Heart right ventricle (tissue), 16 donors: ENCODE measurements at regions of chr9 and their contacts with region 1.

Region 1: DNA sequence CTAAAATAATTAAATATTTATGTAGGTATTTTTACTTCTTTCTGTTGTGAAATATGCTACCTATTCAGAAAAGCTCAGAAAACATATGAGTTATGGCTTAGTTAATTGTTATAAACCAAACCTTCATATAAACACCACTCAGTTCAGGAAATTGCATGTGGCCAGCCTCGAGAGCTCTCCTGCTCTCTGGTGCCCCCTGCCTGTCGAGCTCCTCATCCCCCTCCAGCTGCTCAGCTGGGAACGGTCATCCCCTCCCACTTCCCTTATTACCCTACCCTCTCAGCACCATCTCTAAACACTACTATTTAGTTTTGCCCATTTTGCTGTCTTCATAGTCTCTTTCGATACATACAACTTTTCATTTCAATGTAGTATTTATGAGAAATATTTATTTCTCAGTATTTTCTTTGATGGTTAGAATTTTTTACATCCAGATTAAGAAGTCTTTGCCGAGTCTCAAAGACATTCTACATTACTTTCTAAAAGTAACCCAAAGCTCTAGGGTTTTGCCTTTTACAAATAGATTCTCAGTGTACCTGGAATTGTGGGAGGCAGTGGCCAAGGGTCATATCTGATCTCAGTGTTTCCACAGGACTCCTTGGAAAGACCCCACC is 51.2 kb upstream of the SEMA4D start:
- DNase-seq: peak; percentile 74 to 81
- ATAC-seq: peak; percentile 83 to 97 (median 94)
- H3K4me3 ChIP-seq: no peak overlapping the region
- H3K27ac ChIP-seq: no peak overlapping the region
- H3K4me1 ChIP-seq: peaks cover 0 to 29% (median 0%) of the 10 kb centered on the region in 9 donors
- H3K27me3 ChIP-seq: peaks cover 0 to 3% (median 0%) of the 10 kb centered on the region in 7 donors
- CTCF ChIP-seq: peak; percentile 72 to 98 (median 93)

Region 2: GRCh38 chr9:89318123-89319014 is 230.8 kb before region 1 on chr9 and contains the start of gene SECISBP2:
- intact Hi-C with region 1: loop called in 8 of 10 experiments (anchors 1 to 5 kb)
- DNase-seq: peak; percentile 96 to 97
- ATAC-seq: peak; percentile 98 to 99 (median 99)
- H3K4me3 ChIP-seq: peak within 1 kb of the TSS; percentile 56 to 81 (median 67)
- H3K27ac ChIP-seq: peak within 1 kb of the TSS; percentile 98 to 100 (median 99)
- H3K4me1 ChIP-seq: peaks cover 5 to 62% (median 39%) of the 10 kb centered on the region in 9 donors
- H3K27me3 ChIP-seq: no peaks in the 10 kb centered on the region
- CTCF ChIP-seq: peak in 7 of 9 donors; percentile 78 to 93 (median 82)
- total RNA-seq, gene SECISBP2: 13.9 to 18.8 (median 17.0) TPM

Region 3: GRCh38 chr9:89323390-89323789 is 225.7 kb before region 1 on chr9:
- intact Hi-C with region 1: loop called in 9 of 10 experiments (anchors 1 to 5 kb)
- DNase-seq: no peak
- ATAC-seq: no peak
- H3K4me3 ChIP-seq: no peak overlapping the region
- H3K27ac ChIP-seq: no peak overlapping the region
- H3K4me1 ChIP-seq: peaks cover 5 to 53% (median 36%) of the 10 kb centered on the region in 9 donors
- H3K27me3 ChIP-seq: no peaks in the 10 kb centered on the region
- CTCF ChIP-seq: no peak

Region 4: DNA sequence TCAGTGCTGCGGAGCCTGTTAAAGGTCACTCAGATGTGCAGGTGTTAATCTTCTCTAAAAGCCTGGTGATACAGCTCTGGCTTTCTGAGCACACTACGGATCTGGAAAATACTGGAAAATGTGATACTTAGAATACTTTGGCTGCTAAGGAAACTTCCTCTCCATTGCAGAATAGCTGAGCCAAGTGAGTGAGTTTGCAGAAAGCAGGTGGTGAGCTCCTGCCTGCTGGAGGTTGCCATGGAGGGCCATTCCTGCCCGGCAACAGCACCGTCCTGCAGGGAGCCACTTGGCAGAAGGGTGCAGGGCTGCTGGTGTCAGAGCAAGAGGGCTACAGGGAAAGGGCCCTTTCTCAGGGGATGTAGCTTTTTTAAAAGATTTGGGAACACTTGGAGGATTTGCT is 190.2 kb before region 1 on chr9:
- intact Hi-C with region 1: loop called in 1 of 10 experiments (anchors 10 kb)
- DNase-seq: peak in 1 of 2 donors; percentile 40
- ATAC-seq: peak in 6 of 8 donors; percentile 39 to 86 (median 70)
- H3K4me3 ChIP-seq: no peak overlapping the region
- H3K27ac ChIP-seq: peak overlapping the region in 4 of 10 donors; percentile 22 to 79 (median 58)
- H3K4me1 ChIP-seq: peaks cover 5 to 35% (median 24%) of the 10 kb centered on the region in 9 donors
- H3K27me3 ChIP-seq: no peaks in the 10 kb centered on the region
- CTCF ChIP-seq: no peak

Region 5: GRCh38 chr9:89388084-89388867 is 160.9 kb before region 1 on chr9:
- intact Hi-C with region 1: loop called in 3 of 10 experiments (anchors 5 to 10 kb)
- DNase-seq: peak; percentile 34 to 37
- ATAC-seq: peak; percentile 58 to 78 (median 70)
- H3K4me3 ChIP-seq: no peak overlapping the region
- H3K27ac ChIP-seq: peak overlapping the region in 4 of 10 donors; percentile 9 to 83 (median 56)
- H3K4me1 ChIP-seq: peaks cover 0 to 29% (median 6%) of the 10 kb centered on the region in 9 donors
- H3K27me3 ChIP-seq: no peaks in the 10 kb centered on the region
- CTCF ChIP-seq: no peak

Region 6: DNA sequence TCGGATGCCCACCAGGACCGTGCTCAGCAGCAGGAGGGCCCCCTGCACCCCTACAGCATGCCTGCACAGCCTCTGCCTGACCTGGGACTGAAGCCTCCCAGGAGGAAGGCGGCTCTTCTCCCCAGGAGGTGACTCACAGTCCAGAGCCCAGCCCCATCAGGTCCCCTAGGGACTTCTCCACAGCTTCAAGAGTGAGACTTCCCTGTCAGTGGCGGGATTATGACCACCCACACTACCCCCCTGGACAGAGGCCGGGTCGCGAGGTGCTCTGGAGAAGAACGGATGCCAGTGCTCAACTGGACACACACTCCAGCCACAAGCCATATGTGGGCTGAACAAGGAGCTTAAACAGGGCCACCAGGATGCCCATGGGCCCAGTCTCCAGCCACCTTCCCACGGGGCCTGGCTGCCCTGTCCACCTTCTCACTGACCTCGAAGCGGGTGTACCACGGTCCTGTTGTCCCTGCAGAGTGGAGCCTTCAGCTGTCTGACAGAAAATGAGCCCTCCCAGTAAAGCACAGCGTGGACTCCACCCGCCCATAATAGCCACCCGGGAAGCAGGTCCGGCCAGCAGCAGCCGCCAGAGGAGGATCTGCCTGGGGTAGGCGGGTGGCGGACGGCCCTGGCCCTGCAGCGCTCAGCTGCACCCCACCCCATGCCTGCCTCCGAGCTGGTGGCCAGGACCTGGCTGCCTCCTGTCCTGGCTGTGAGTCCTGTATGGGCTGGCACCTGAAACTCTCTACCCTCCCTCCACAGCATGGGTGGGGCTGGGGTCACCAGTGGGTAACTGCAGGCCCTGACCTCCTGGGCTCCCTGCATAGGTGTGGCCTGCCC is 105.9 kb before region 1 on chr9:
- intact Hi-C with region 1: loop called in 1 of 10 experiments (anchors 10 kb)
- DNase-seq: no peak
- ATAC-seq: no peak
- H3K4me3 ChIP-seq: no peak overlapping the region
- H3K27ac ChIP-seq: peak overlapping the region in 1 of 10 donors; percentile 20
- H3K4me1 ChIP-seq: peaks cover 0 to 71% (median 19%) of the 10 kb centered on the region in 9 donors
- H3K27me3 ChIP-seq: no peaks in the 10 kb centered on the region
- CTCF ChIP-seq: no peak